ENCODE measurements at regions of chrX and their contacts with region 1.

Region 1: DNA sequence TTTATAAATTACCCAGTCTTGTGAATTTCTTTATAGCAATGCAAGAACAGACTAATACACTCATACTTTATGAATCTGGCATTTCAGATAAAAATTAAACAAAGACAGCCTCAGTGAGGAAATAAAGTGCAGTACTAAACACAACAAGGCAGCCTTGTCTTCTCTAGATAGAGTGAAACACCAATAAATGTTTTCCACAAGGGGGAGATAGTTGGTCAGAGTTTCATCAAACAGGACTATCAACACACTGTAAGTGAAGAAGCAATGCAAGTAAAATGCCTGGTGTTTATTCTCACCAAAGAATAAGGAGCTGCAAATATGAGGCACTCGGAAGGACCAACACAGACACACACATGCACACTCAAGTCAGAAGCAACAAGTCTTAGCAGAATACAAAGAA is 62.8 kb downstream of the FAM9B start:
- DNase-seq: peak in 4 of 5 donors; percentile 47 to 63 (median 50)
- H3K4me3 ChIP-seq: no peak overlapping the region
- H3K4me3 Mint-ChIP-seq: no peak overlapping the region
- H3K27ac ChIP-seq: no peak overlapping the region
- H3K27ac Mint-ChIP-seq: peak overlapping the region in 2 of 7 donors; percentile 0 to 10
- H3K4me1 ChIP-seq: no peaks in the 10 kb centered on the region
- H3K4me1 Mint-ChIP-seq: peaks cover 0 to 2% (median 0%) of the 10 kb centered on the region in 4 donors
- H3K27me3 ChIP-seq: no peaks in the 10 kb centered on the region
- H3K27me3 Mint-ChIP-seq: no peaks in the 10 kb centered on the region

Region 2: DNA sequence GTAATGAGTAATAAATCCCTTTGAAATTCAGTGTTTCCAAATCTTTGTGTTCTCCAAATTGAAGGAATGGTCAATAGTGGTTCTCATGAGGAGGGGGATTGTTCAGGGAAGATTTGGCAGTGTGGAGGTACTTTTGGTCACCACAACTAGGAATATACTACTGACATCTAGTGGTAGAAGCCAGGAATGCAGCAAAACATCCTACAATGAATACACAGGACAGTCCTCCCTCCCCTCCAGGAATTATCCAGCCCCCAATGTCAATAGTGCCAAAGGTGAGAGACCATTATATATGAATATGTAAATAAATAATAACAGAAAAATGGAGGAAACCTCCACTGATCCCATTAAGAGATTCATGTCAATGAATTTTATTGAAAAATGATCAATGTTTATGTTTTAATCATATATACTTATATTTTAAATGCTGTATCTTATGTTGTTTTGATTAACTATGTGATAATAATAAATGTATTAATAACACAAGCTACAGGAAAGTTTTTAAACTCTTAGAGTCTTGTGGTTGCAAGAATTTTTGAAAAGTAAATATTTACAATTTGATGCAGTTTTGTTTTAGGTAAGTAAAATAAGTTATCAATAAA is 155.6 kb before region 1 on chrX:
- CTCF ChIA-PET with region 1: no interaction called
- POLR2A ChIA-PET with region 1: no interaction called
- intact Hi-C with region 1: loop called (anchors 5 kb)
- DNase-seq: peak in 4 of 5 donors; percentile 18 to 40 (median 32)
- H3K4me3 ChIP-seq: no peak overlapping the region
- H3K4me3 Mint-ChIP-seq: no peak overlapping the region
- H3K27ac ChIP-seq: no peak overlapping the region
- H3K27ac Mint-ChIP-seq: no peak overlapping the region
- H3K4me1 ChIP-seq: no peaks in the 10 kb centered on the region
- H3K4me1 Mint-ChIP-seq: no peaks in the 10 kb centered on the region
- H3K27me3 ChIP-seq: no peaks in the 10 kb centered on the region
- H3K27me3 Mint-ChIP-seq: peaks cover 0 to 2% of the 10 kb centered on the region in 2 donors

Region 3: GRCh38 chrX:9312922-9313867 is 342.1 kb after region 1 on chrX:
- CTCF ChIA-PET with region 1: interaction called, 13 read pairs
- POLR2A ChIA-PET with region 1: interaction called, 3 read pairs
- intact Hi-C with region 1: loop called (anchors 1 kb)
- DNase-seq: peak; percentile 60 to 72 (median 67)
- H3K4me3 ChIP-seq: no peak overlapping the region
- H3K4me3 Mint-ChIP-seq: peak overlapping the region in 4 of 8 donors; percentile 62 to 77 (median 66)
- H3K27ac ChIP-seq: no peak overlapping the region
- H3K27ac Mint-ChIP-seq: peak overlapping the region in 3 of 7 donors; percentile 9 to 53 (median 23)
- H3K4me1 ChIP-seq: no peaks in the 10 kb centered on the region
- H3K4me1 Mint-ChIP-seq: peaks cover 11 to 16% (median 12%) of the 10 kb centered on the region in 4 donors
- H3K27me3 ChIP-seq: no peaks in the 10 kb centered on the region
- H3K27me3 Mint-ChIP-seq: no peaks in the 10 kb centered on the region

Region 4: DNA sequence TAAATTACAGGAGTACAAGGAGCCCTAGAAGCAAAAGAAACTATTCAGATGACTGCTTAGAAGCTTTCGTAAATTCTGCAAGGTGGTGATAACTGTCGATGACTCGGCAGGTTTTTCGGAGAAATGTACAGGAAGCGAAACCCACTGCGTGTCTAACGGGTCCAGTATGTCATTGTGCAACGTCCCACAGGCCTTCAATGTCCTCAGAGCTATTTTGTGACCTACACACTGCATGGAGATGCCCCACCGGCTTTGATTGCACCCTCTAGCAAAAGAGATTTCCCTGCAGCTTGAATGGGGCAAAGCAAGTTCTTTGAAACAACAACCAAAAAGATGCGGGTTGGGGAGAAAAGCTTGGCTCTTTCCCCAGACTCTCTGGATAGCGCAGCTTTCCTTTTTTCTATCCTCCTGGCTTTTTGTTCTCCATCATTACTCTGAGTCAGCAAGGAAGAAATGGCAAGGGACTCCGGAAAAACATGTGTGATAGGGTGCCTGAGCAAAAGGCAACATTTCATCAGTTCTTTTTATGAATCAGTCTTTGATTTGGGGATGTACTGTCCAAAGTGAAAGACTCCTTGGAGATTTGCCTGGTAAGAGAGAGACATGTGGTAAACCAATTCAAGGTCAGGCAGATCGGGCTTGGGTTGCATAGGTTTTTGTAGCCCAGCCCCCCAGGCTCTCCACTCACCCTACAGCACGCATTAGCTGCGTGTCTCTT is 381.7 kb after region 1 on chrX:
- CTCF ChIA-PET with region 1: no interaction called
- POLR2A ChIA-PET with region 1: interaction called, 3 read pairs
- intact Hi-C with region 1: loop called (anchors 1 kb)
- DNase-seq: peak in 3 of 5 donors; percentile 19 to 39 (median 24)
- H3K4me3 ChIP-seq: peak overlapping the region in 1 of 2 donors; percentile 35
- H3K4me3 Mint-ChIP-seq: peak overlapping the region; percentile 62 to 81 (median 77)
- H3K27ac ChIP-seq: peak overlapping the region; percentile 21
- H3K27ac Mint-ChIP-seq: peak overlapping the region; percentile 47 to 96 (median 92)
- H3K4me1 ChIP-seq: peaks cover 43% of the 10 kb centered on the region
- H3K4me1 Mint-ChIP-seq: peaks cover 20 to 40% (median 37%) of the 10 kb centered on the region in 4 donors
- H3K27me3 ChIP-seq: no peaks in the 10 kb centered on the region
- H3K27me3 Mint-ChIP-seq: no peaks in the 10 kb centered on the region

Region 5: GRCh38 chrX:9708904-9709553 is 737.9 kb after region 1 on chrX:
- CTCF ChIA-PET with region 1: interaction called, 5 read pairs
- POLR2A ChIA-PET with region 1: no interaction called
- intact Hi-C with region 1: loop called (anchors 1 kb)
- DNase-seq: peak; percentile 71 to 80 (median 79)
- H3K4me3 ChIP-seq: no peak overlapping the region
- H3K4me3 Mint-ChIP-seq: peak overlapping the region in 3 of 8 donors; percentile 7 to 57 (median 35)
- H3K27ac ChIP-seq: no peak overlapping the region
- H3K27ac Mint-ChIP-seq: peak overlapping the region in 4 of 7 donors; percentile 14 to 92 (median 42)
- H3K4me1 ChIP-seq: peaks cover 6% of the 10 kb centered on the region
- H3K4me1 Mint-ChIP-seq: peaks cover 5 to 13% (median 11%) of the 10 kb centered on the region in 4 donors
- H3K27me3 ChIP-seq: no peaks in the 10 kb centered on the region
- H3K27me3 Mint-ChIP-seq: no peaks in the 10 kb centered on the region

Measured in CD4-positive, alpha-beta memory T cell (primary cell).